Breast epithelium (tissue), 4 donors: ENCODE measurements at regions of chrX and their contacts with region 1.

Region 1: DNA sequence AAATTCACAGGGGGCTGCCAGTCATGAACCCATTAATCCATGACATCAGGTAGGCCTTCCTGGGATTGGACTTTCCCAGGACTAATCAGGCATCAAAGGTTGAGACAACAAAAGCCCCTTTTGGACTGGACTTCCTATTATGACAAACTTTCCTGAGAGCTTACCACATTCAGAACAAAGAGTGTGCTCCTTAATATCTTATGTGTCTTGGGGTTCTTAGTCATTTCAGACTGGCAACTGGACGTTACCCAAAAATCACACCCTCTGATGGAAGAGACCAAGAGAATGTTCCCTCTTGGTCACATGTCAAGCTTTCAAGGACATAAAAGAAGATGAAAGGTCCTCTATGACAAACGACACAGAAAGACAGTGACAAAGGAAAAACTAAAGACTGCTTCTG is 31.6 kb upstream of the PPP1R2C start:
- DNase-seq: no peak
- H3K4me3 ChIP-seq: no peak overlapping the region
- H3K27ac ChIP-seq: no peak overlapping the region
- H3K4me1 ChIP-seq: no peaks in the 10 kb centered on the region
- H3K27me3 ChIP-seq: no peaks in the 10 kb centered on the region
- CTCF ChIP-seq: no peak
- POLR2A ChIP-seq: no peak

Region 2: GRCh38 chrX:42540146-42540545 is 269.4 kb before region 1 on chrX:
- intact Hi-C with region 1: loop called (anchors 5 kb)
- DNase-seq: no peak
- H3K4me3 ChIP-seq: no peak overlapping the region
- H3K27ac ChIP-seq: no peak overlapping the region
- H3K4me1 ChIP-seq: no peaks in the 10 kb centered on the region
- H3K27me3 ChIP-seq: peaks cover 0 to 49% of the 10 kb centered on the region in 2 donors
- CTCF ChIP-seq: no peak
- POLR2A ChIP-seq: no peak